HCT116 (cell line): ENCODE measurements at regions of chr12 and their contacts with region 1.

Region 1: GRCh38 chr12:86914716-86915115 is 658.5 kb upstream of the MGAT4C start:
- DNase-seq: peak; percentile 39
- ATAC-seq: peak; percentile 82
- H3K4me3 ChIP-seq: no peak overlapping the region
- H3K27ac ChIP-seq: no peak overlapping the region
- H3K4me1 ChIP-seq: no peaks in the 10 kb centered on the region
- H3K27me3 ChIP-seq: no peaks in the 10 kb centered on the region
- CTCF ChIP-seq: peak; percentile 65 to 69 (median 66); a peak in 5 of 6 replicates
- POLR2A ChIP-seq: no peak
- RAD21 ChIP-seq: peak; percentile 84

Region 2: GRCh38 chr12:85951823-85952222 is 962.9 kb before region 1 on chr12:
- CTCF ChIA-PET with region 1: interaction called, 6 read pairs
- POLR2A ChIA-PET with region 1: no interaction called
- RAD21 ChIA-PET with region 1: no interaction called
- intact Hi-C with region 1: loop called (anchors 5 kb)
- DNase-seq: peak; percentile 19
- ATAC-seq: no peak
- H3K4me3 ChIP-seq: no peak overlapping the region
- H3K27ac ChIP-seq: no peak overlapping the region
- H3K4me1 ChIP-seq: no peaks in the 10 kb centered on the region
- H3K27me3 ChIP-seq: no peaks in the 10 kb centered on the region
- CTCF ChIP-seq: peak; percentile 34 to 64 (median 40); a peak in 4 of 6 replicates
- POLR2A ChIP-seq: no peak
- RAD21 ChIP-seq: peak; percentile 65

Region 3: GRCh38 chr12:85971800-85972199 is 942.9 kb before region 1 on chr12:
- CTCF ChIA-PET with region 1: interaction called, 3 read pairs
- POLR2A ChIA-PET with region 1: no interaction called
- RAD21 ChIA-PET with region 1: no interaction called
- intact Hi-C with region 1: loop called (anchors 5 kb)
- DNase-seq: no peak
- ATAC-seq: no peak
- H3K4me3 ChIP-seq: no peak overlapping the region
- H3K27ac ChIP-seq: no peak overlapping the region
- H3K4me1 ChIP-seq: no peaks in the 10 kb centered on the region
- H3K27me3 ChIP-seq: no peaks in the 10 kb centered on the region
- CTCF ChIP-seq: peak in 2 of 3 experiments; percentile 13 to 39; a peak in 3 of 6 replicates
- POLR2A ChIP-seq: no peak
- RAD21 ChIP-seq: peak; percentile 44

Region 4: GRCh38 chr12:86264451-86265342 is 650.0 kb before region 1 on chr12:
- CTCF ChIA-PET with region 1: interaction called, 4 read pairs
- POLR2A ChIA-PET with region 1: no interaction called
- RAD21 ChIA-PET with region 1: no interaction called
- intact Hi-C with region 1: loop called (anchors 2 kb)
- DNase-seq: no peak
- ATAC-seq: no peak
- H3K4me3 ChIP-seq: no peak overlapping the region
- H3K27ac ChIP-seq: no peak overlapping the region
- H3K4me1 ChIP-seq: no peaks in the 10 kb centered on the region
- H3K27me3 ChIP-seq: no peaks in the 10 kb centered on the region
- CTCF ChIP-seq: no peak
- POLR2A ChIP-seq: no peak
- RAD21 ChIP-seq: no peak

Region 5: DNA sequence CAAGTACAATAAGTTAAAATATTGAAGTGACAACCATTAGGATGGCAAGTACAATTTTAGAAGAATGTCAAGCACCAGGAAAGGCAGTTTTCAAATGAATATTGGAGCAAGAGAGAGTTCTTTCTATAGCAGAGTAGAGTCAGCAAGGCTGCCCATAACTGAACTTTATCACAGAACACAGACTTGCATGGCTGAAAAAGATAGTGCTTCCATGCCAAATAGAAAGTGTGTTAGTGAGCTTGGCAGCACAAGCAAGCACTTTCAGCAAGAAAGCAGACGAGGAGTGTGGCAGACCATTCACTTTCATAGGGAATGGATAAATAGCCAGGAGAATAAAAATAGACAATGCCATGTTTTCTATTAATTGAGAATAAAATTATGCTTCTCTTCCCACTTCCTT is 11.6 kb before region 1 on chr12:
- CTCF ChIA-PET with region 1: interaction called, 12 read pairs
- POLR2A ChIA-PET with region 1: no interaction called
- RAD21 ChIA-PET with region 1: interaction called in 1 of 2 experiments, 3 read pairs
- intact Hi-C with region 1: no loop called
- DNase-seq: no peak
- ATAC-seq: no peak
- H3K4me3 ChIP-seq: no peak overlapping the region
- H3K27ac ChIP-seq: no peak overlapping the region
- H3K4me1 ChIP-seq: no peaks in the 10 kb centered on the region
- H3K27me3 ChIP-seq: no peaks in the 10 kb centered on the region
- CTCF ChIP-seq: no peak
- POLR2A ChIP-seq: no peak
- RAD21 ChIP-seq: no peak

Region 6: DNA sequence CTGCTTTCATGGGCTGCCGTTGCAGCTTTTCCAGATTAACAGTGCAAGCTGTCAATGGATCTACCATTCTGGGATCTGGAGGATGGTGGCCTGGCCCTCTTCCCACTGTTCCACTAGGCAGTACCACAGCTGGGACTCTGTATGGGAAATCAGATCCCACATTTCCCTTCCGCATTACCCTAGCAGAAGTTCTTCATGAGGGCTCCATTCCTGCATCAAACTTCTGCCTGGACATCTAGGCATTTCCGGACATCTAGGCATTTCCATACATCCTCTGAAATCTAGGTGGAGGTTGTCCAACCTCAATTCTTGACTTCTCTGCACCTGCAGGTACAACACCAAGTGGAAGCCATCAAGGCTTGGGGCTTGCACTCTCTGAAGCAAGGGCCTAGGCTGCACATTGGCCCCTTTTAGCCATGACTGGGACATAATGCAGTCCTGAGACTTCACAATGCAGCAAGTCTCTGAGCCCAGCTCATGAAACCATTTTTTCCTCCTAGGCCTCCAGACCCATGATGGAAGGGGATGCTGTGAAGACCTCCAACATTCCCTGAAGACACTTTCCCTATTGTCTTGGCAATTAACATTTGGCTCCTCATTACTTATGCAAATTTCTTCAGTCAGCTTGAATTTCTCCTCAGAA is 251.1 kb after region 1 on chr12:
- CTCF ChIA-PET with region 1: no interaction called
- POLR2A ChIA-PET with region 1: no interaction called
- RAD21 ChIA-PET with region 1: no interaction called
- intact Hi-C with region 1: no loop called
- DNase-seq: no peak
- ATAC-seq: no peak
- H3K4me3 ChIP-seq: no peak overlapping the region
- H3K27ac ChIP-seq: no peak overlapping the region
- H3K4me1 ChIP-seq: no peaks in the 10 kb centered on the region
- H3K27me3 ChIP-seq: no peaks in the 10 kb centered on the region
- CTCF ChIP-seq: no peak
- POLR2A ChIP-seq: no peak
- RAD21 ChIP-seq: no peak